Breast epithelium (tissue), 4 donors: ENCODE measurements at regions of chr10 and their contacts with region 1.

Region 1: GRCh38 chr10:69068549-69068948 is 19.4 kb upstream of the SRGN start:
- DNase-seq: no peak
- H3K4me3 ChIP-seq: no peak overlapping the region
- H3K27ac ChIP-seq: no peak overlapping the region
- H3K4me1 ChIP-seq: no peaks in the 10 kb centered on the region
- H3K27me3 ChIP-seq: no peaks in the 10 kb centered on the region
- CTCF ChIP-seq: no peak
- POLR2A ChIP-seq: no peak

Region 2: GRCh38 chr10:68901104-68901927 is 167.2 kb before region 1 on chr10 and contains the start of gene DDX50:
- intact Hi-C with region 1: no loop called
- DNase-seq: peak; percentile 96 to 99
- H3K4me3 ChIP-seq: peak within 1 kb of the TSS; percentile 84 to 95 (median 87)
- H3K27ac ChIP-seq: peak within 1 kb of the TSS; percentile 98 to 100
- H3K4me1 ChIP-seq: peaks cover 0 to 3% of the 10 kb centered on the region in 2 donors
- H3K27me3 ChIP-seq: no peaks in the 10 kb centered on the region
- CTCF ChIP-seq: peak in 1 of 3 donors; percentile 15
- POLR2A ChIP-seq: no peak
- total RNA-seq, gene DDX50: 40.3 to 50.2 (median 43.9) TPM

Region 3: GRCh38 chr10:69033256-69033655 is 35.3 kb before region 1 on chr10:
- intact Hi-C with region 1: loop called (anchors 1 kb)
- DNase-seq: no peak
- H3K4me3 ChIP-seq: no peak overlapping the region
- H3K27ac ChIP-seq: no peak overlapping the region
- H3K4me1 ChIP-seq: no peaks in the 10 kb centered on the region
- H3K27me3 ChIP-seq: no peaks in the 10 kb centered on the region
- CTCF ChIP-seq: no peak
- POLR2A ChIP-seq: no peak